ENCODE measurements at regions of chr1 and their contacts with region 1.

Region 1: DNA sequence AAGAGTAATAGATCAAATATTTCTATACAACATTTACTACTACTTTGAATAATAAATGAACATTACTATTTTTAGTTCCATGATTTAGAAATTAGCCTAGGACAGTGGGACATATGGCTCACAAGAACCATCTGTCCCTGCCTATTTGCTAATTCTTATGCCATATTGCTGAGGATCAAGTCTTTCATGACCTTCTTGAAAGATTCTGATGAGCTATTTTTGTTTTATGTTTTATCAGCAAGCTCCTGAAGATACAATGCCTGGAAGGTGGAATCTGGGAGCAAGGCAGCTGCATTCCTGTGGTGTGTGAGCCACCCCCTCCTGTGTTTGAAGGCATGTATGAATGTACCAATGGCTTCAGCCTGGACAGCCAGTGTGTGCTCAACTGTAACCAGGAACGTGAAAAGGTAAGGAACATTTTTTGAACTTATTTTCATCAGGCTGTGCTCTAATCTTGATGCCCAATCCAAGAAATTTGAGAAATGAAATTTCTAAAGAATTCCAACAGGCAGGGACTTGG is 326.7 kb downstream of the PAPPA2 start:
- DNase-seq: no peak
- ATAC-seq: no peak
- H3K4me3 ChIP-seq: no peak overlapping the region
- H3K27ac ChIP-seq: no peak overlapping the region
- H3K4me1 ChIP-seq: no peaks in the 10 kb centered on the region
- H3K27me3 ChIP-seq: no peaks in the 10 kb centered on the region
- CTCF ChIP-seq: no peak

Region 2: DNA sequence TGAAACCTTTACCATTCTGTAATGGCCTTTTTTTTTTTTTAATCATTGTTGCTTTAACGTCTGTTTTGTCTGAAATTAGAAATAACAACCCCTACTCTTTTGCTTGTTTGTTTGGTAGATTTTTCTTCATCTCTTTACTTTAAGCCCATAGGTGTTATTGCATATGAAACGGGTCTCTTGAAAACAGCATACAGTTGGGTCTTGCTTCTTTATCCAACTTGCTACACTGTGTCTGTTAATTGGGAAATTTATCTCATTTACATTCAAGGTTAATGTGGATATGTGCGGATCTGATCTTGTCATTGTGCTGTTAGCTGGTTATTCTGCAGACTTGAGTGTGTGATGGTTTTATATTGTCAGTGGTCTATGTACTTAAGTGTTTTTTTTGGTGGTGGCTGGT is 503.6 kb before region 1 on chr1:
- intact Hi-C with region 1: loop called (anchors 10 kb)
- DNase-seq: no peak
- ATAC-seq: no peak
- H3K4me3 ChIP-seq: no peak overlapping the region
- H3K27ac ChIP-seq: no peak overlapping the region
- H3K4me1 ChIP-seq: no peaks in the 10 kb centered on the region
- H3K27me3 ChIP-seq: no peaks in the 10 kb centered on the region
- CTCF ChIP-seq: no peak